Activated T-helper 1 cell treated with anti-CD3 and anti-CD28 coated beads, Interleukin-12 subunit alpha, Interleukin-12 subunit beta, Interleukin-2, Interleukin-4 antibody, amounts not matched to agents 30 ng/mL and 10 ng/mL and 1 ng/mL, durations not matched to agents 14 hours and 24 hours and 36 hours (primary cell): ENCODE measurements at regions of chr5 and their contacts with region 1.

Region 1: DNA sequence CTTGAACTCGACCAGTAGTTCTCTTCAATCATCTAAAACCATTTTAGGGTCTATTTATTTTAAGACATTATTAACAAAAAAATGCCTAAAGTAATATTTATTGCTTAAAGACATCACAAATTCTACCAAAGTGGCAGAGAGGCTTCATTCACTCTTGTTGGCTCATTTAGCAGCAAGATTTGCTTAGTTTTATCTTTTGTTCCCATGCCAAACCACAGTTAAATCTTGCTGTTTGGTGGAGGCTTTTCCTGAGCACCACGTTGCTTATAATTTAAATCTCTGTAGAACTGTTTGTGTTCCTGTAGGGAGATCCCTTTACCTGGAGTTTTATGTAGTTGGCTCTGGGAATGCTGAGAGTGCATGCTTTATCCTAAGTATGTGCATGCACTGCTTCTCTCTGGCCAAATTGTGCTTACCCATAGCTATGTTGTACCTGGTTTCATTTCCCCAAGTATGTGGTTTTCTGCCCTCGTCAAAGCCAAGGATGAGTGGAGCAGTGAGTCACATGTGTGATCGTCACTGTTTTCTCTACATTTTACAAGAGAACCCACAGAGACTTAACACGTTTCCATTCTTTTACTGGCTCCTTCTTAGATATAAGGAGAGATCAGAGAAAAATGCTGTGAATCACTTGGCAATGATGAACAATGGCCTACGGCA is 42.1 kb upstream of the MAST4 start:
- DNase-seq: peak; percentile 50
- H3K4me3 Mint-ChIP-seq: no peak overlapping the region
- H3K27ac Mint-ChIP-seq: peak overlapping the region; percentile 26
- H3K4me1 Mint-ChIP-seq: peaks cover 32% of the 10 kb centered on the region
- H3K27me3 Mint-ChIP-seq: no peaks in the 10 kb centered on the region

Region 2: GRCh38 chr5:66440202-66440680 is 113.8 kb before region 1 on chr5:
- intact Hi-C with region 1: loop called (anchors 1 kb)
- DNase-seq: no peak
- H3K4me3 Mint-ChIP-seq: no peak overlapping the region
- H3K27ac Mint-ChIP-seq: no peak overlapping the region
- H3K4me1 Mint-ChIP-seq: no peaks in the 10 kb centered on the region
- H3K27me3 Mint-ChIP-seq: no peaks in the 10 kb centered on the region

Region 3: GRCh38 chr5:66540078-66540477 is 14.0 kb before region 1 on chr5:
- intact Hi-C with region 1: loop called (anchors 1 kb)
- DNase-seq: no peak
- H3K4me3 Mint-ChIP-seq: no peak overlapping the region
- H3K27ac Mint-ChIP-seq: no peak overlapping the region
- H3K4me1 Mint-ChIP-seq: peaks cover 19% of the 10 kb centered on the region
- H3K27me3 Mint-ChIP-seq: peaks cover 13% of the 10 kb centered on the region

Region 4: DNA sequence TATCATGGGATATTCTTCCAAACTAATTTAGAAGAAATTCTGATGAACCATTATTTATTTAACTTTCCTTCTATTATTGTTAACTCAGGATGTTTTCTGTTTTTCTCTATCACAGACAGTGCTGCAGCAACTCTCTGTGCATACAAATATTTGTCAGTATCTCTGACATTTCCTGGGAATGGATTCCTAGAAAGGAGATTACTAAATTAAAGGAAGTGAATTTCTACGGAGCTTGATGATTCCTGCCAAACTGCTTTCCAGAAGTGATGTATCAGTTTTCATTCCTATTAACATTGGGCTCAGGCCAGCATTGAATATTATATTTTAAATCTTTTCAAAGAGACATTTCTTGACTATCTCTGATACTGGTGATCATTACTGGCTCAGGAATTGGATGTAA is 16.2 kb after region 1 on chr5:
- intact Hi-C with region 1: no loop called
- DNase-seq: no peak
- H3K4me3 Mint-ChIP-seq: no peak overlapping the region
- H3K27ac Mint-ChIP-seq: no peak overlapping the region
- H3K4me1 Mint-ChIP-seq: peaks cover 26% of the 10 kb centered on the region
- H3K27me3 Mint-ChIP-seq: peaks cover 18% of the 10 kb centered on the region

Region 5: DNA sequence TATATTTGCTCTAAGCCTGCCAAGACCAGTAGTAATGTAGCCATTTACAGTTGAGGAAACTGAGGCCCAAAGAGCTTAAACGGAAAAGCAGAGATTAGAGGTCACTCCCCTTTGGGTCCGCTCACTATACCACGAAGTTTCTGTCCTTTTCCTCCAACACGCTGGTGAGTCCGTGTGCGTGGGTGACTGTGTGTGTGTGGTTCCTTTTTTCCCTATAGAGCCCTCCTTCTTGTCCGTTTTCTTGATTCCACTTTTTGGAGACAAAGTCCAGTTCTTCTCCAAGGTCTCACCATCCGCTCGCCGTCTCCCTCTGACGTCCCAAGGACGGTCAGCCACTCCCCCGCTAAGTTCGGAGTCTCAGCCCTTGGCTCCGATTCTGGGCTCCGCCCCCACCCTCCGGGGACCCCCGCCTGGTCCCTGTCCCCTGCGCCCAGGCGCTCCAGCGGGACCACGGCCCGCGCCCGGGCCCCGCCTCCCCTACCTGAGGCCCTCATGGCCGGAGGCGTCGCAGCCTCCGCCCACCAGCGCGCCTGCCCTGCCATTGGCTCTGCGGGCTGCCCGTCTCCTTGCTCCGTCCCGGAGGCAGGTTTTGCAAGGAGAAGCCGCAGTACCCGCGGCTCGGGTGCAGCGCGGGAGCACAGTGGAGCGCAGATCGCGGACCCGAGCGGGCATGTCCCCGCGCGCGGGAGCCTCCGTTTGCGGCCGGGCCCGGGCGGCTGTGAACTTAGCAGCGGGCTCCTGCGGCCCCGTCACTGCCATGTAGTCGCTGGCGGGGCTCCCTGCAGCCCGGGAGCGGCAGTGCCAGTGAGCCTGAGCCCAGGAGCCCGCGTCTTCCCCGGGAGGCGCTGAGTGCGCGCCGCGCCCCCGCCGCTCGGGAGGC is 42.0 kb after region 1 on chr5 and contains the start of gene MAST4:
- intact Hi-C with region 1: loop called (anchors 2 kb)
- DNase-seq: peak; percentile 80
- H3K4me3 Mint-ChIP-seq: peak within 1 kb of the TSS; percentile 87
- H3K27ac Mint-ChIP-seq: peak within 1 kb of the TSS; percentile 56
- H3K4me1 Mint-ChIP-seq: peaks cover 34% of the 10 kb centered on the region
- H3K27me3 Mint-ChIP-seq: peaks cover 56% of the 10 kb centered on the region
- total RNA-seq, gene MAST4: 18.4 and 19.0 TPM in 2 replicates

Region 6: DNA sequence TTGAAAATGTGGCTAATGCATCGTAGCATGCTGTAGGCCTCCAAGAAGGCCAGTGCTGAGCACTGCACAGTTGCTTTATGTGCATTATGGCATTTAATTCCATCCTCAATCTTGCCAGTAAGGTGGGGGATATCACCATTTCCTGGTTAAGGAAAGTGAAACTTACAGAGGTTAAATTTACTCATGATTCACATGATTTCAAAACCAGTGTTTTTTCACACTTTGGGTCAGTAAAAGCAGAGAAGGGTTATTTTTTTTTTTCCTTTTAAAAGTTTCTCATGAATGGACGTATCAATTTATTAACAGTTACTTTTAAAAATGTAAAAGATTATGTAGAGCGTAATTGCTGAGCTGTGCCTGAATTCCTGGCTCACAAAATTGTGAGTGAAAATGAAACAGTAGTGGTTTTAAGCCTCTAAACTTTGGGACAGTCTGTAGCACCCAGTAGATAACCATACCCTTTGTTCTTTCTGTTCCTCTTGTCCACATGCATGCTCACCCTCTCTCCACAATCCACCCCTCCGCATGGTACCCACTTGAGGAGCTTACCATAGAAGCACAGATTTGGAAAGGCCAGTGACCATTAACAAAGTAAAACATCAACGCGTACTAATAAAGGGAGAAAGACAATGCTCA is 63.3 kb after region 1 on chr5:
- intact Hi-C with region 1: loop called (anchors 1 kb)
- DNase-seq: no peak
- H3K4me3 Mint-ChIP-seq: peak overlapping the region; percentile 52
- H3K27ac Mint-ChIP-seq: peak overlapping the region; percentile 69
- H3K4me1 Mint-ChIP-seq: peaks cover 57% of the 10 kb centered on the region
- H3K27me3 Mint-ChIP-seq: peaks cover 11% of the 10 kb centered on the region

Region 7: GRCh38 chr5:66840511-66841013 is 286.5 kb after region 1 on chr5:
- intact Hi-C with region 1: loop called (anchors 2 kb)
- DNase-seq: peak; percentile 53
- H3K4me3 Mint-ChIP-seq: peak overlapping the region; percentile 38
- H3K27ac Mint-ChIP-seq: peak overlapping the region; percentile 81
- H3K4me1 Mint-ChIP-seq: peaks cover 81% of the 10 kb centered on the region
- H3K27me3 Mint-ChIP-seq: no peaks in the 10 kb centered on the region

Region 8: GRCh38 chr5:67203701-67204074 is 649.6 kb after region 1 on chr5:
- intact Hi-C with region 1: loop called (anchors 1 kb)
- DNase-seq: no peak
- H3K4me3 Mint-ChIP-seq: no peak overlapping the region
- H3K27ac Mint-ChIP-seq: peak overlapping the region; percentile 98
- H3K4me1 Mint-ChIP-seq: peaks cover 98% of the 10 kb centered on the region
- H3K27me3 Mint-ChIP-seq: no peaks in the 10 kb centered on the region